WTC11 (cell line): ENCODE measurements at regions of chr19 and their contacts with region 1.

Region 1: DNA sequence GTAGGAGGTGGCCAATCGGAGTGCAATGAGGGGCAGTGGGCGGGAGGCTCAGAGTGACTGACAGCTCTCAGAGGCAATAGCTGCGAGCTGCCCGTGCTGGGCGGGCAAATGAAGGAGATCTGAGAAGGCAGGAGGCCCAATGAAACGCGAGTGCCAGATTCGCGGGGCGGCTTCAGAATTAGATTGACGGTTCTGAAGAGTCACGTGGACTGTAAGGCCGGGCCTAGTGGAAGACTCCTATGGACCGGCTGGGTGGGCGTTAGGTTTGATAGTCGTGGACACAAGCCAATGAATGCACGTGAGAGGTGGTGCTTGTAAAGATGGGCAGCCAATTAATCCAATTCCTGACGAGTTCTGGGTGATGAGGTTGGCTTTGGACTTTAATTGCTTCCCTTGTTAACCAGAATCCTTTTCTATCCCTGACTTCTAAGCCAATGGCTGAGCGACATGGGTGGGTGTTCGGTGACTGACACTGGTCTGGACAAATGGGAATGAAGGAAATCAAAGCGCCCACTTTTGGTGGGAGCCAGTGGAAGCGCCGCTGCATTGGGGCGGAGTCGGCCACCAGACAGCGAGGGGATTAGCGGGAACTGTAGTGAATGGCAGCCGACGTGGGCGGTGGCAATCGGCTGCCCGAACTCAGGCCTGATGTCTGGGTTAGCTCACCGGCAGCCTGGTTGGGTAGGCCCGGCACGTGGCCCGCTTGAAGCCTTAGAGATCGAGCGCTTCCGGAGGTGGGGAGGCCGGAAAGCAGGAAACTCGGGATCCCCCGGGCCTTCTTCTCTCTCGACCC is 524 bp upstream of the KHSRP start:
- DNase-seq: peak; percentile 99
- ATAC-seq: peak; percentile 88
- H3K4me3 Mint-ChIP-seq: peak overlapping the region; percentile 52
- H3K27ac Mint-ChIP-seq: peak overlapping the region; percentile 34; the same call in 1 of the 2 replicates
- H3K4me1 Mint-ChIP-seq: peaks cover 14% of the 10 kb centered on the region
- H3K27me3 Mint-ChIP-seq: peaks cover 32% of the 10 kb centered on the region
- CTCF ChIP-seq: no peak

Region 2: GRCh38 chr19:6183374-6183773 is 241.8 kb before region 1 on chr19:
- CTCF ChIA-PET with region 1: interaction called, 10 read pairs
- POLR2A ChIA-PET with region 1: no interaction called
- DNase-seq: no peak
- ATAC-seq: no peak
- H3K4me3 Mint-ChIP-seq: no peak overlapping the region
- H3K27ac Mint-ChIP-seq: no peak overlapping the region
- H3K4me1 Mint-ChIP-seq: no peaks in the 10 kb centered on the region
- H3K27me3 Mint-ChIP-seq: peaks cover 49% of the 10 kb centered on the region
- CTCF ChIP-seq: no peak

Region 3: DNA sequence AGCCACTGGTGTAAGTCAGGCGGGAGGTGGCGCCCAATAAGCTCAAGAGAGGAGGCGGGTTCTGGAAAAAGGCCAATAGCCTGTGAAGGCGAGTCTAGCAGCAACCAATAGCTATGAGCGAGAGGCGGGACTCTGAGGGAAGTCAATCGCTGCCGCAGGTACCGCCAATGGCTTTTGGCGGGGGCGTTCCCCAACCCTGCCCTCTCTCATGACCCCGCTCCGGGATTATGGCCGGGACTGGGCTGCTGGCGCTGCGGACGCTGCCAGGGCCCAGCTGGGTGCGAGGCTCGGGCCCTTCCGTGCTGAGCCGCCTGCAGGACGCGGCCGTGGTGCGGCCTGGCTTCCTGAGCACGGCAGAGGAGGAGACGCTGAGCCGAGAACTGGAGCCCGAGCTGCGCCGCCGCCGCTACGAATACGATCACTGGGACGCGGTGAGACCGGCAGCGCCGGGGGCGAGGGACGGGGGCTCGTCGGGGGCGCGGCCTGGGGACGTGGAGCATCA is 52.5 kb before region 1 on chr19 and contains the start of gene ALKBH7:
- CTCF ChIA-PET with region 1: interaction called, 11 read pairs
- POLR2A ChIA-PET with region 1: interaction called, 4 read pairs
- DNase-seq: peak; percentile 96
- ATAC-seq: peak; percentile 74
- H3K4me3 Mint-ChIP-seq: peak within 1 kb of the TSS; percentile 85
- H3K27ac Mint-ChIP-seq: peak within 1 kb of the TSS; percentile 99
- H3K4me1 Mint-ChIP-seq: peaks cover 17% of the 10 kb centered on the region
- H3K27me3 Mint-ChIP-seq: no peaks in the 10 kb centered on the region
- CTCF ChIP-seq: no peak
- total RNA-seq, gene ALKBH7: 96.4 to 119 TPM (median 114 TPM) in 3 replicates

Region 4: GRCh38 chr19:6442087-6442688 is 17.1 kb after region 1 on chr19:
- CTCF ChIA-PET with region 1: no interaction called
- POLR2A ChIA-PET with region 1: no interaction called
- DNase-seq: no peak
- ATAC-seq: no peak
- H3K4me3 Mint-ChIP-seq: no peak overlapping the region
- H3K27ac Mint-ChIP-seq: no peak overlapping the region
- H3K4me1 Mint-ChIP-seq: no peaks in the 10 kb centered on the region
- H3K27me3 Mint-ChIP-seq: no peaks in the 10 kb centered on the region
- CTCF ChIP-seq: no peak

Region 5: DNA sequence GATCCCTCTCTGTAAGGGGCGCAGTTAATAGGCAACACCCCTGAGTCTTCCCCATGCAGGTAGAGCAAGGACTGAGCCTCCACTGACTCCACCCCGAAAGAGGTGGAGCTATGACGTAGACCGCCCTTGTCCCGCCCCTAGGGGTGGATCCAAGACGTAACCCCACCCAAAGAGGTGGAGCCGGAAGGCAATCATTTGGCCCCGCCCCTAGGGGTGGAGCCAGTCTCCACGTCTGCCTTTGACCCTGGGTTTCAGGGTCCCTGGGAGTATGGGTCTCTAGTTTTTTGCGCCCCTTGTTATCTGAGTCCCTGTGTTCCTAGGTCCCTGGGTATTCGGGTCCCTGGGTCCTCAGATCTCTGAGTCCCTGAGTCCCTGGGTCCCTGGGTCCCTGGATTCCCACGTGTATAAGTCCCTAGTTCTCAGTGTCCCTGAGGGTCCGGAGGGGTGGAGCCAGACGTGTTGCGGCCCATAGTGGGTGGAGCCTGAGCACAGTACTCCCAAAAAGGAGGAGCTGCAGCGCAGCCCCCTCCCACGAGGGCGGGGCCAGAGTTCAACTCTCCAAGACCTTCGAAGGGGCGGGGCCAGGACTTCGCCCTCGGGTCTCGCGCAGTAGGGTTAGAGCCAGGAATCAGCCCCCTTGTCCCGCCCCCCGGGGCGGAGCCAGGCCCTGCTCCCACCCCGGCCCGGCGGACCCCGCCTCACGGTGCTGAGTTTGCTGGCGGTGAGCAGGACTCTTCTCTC is 51.2 kb after region 1 on chr19:
- CTCF ChIA-PET with region 1: interaction called, 5 read pairs
- POLR2A ChIA-PET with region 1: interaction called, 10 read pairs
- DNase-seq: peak; percentile 100
- ATAC-seq: peak; percentile 88
- H3K4me3 Mint-ChIP-seq: peak overlapping the region; percentile 81
- H3K27ac Mint-ChIP-seq: peak overlapping the region; percentile 95
- H3K4me1 Mint-ChIP-seq: peaks cover 8% of the 10 kb centered on the region
- H3K27me3 Mint-ChIP-seq: peaks cover 30% of the 10 kb centered on the region
- CTCF ChIP-seq: no peak